ENCODE measurements at regions of chr10 and their contacts with region 1.

Region 1: GRCh38 chr10:84264611-84265141 is 19.8 kb downstream of the RGR start:
- DNase-seq: peak; percentile 66
- ATAC-seq: peak; percentile 99
- H3K4me3 ChIP-seq: no peak overlapping the region
- H3K27ac ChIP-seq: no peak overlapping the region
- H3K4me1 ChIP-seq: no peaks in the 10 kb centered on the region
- H3K27me3 ChIP-seq: peaks cover 3% of the 10 kb centered on the region; the same call in 1 of the 2 replicates
- CTCF ChIP-seq: peak; percentile 96
- POLR2A ChIP-seq: peak; percentile 49; the same call in 1 of the 2 replicates
- RAD21 ChIP-seq: peak; percentile 97

Region 2: GRCh38 chr10:84166620-84167288 is 97.9 kb before region 1 on chr10:
- CTCF ChIA-PET with region 1: no interaction called
- POLR2A ChIA-PET with region 1: no interaction called
- dilution Hi-C with region 1: no loop called
- in situ Hi-C with region 1: no loop called
- intact Hi-C with region 1: no loop called
- DNase-seq: no peak
- ATAC-seq: no peak
- H3K4me3 ChIP-seq: no peak overlapping the region
- H3K27ac ChIP-seq: no peak overlapping the region
- H3K4me1 ChIP-seq: no peaks in the 10 kb centered on the region
- H3K27me3 ChIP-seq: peaks cover 6% of the 10 kb centered on the region
- CTCF ChIP-seq: no peak
- POLR2A ChIP-seq: no peak
- RAD21 ChIP-seq: no peak

Region 3: GRCh38 chr10:84328418-84329195 is 63.9 kb after region 1 on chr10 and contains the start of gene CCSER2:
- CTCF ChIA-PET with region 1: interaction called, 3 read pairs
- POLR2A ChIA-PET with region 1: no interaction called
- dilution Hi-C with region 1: no loop called
- in situ Hi-C with region 1: no loop called
- intact Hi-C with region 1: loop called (anchors 5 kb)
- DNase-seq: no peak
- ATAC-seq: peak; percentile 94
- H3K4me3 ChIP-seq: peak within 1 kb of the TSS; percentile 96
- H3K27ac ChIP-seq: peak within 1 kb of the TSS; percentile 90
- H3K4me1 ChIP-seq: peaks cover 2% of the 10 kb centered on the region; the same call in 1 of the 2 replicates
- H3K27me3 ChIP-seq: no peaks in the 10 kb centered on the region
- CTCF ChIP-seq: no peak
- POLR2A ChIP-seq: peak; percentile 95
- RAD21 ChIP-seq: no peak
- total RNA-seq, gene CCSER2: 27.8 and 31.7 TPM in 2 replicates

Region 4: GRCh38 chr10:84352251-84352842 is 87.7 kb after region 1 on chr10:
- CTCF ChIA-PET with region 1: interaction called, 3 read pairs
- POLR2A ChIA-PET with region 1: no interaction called
- dilution Hi-C with region 1: no loop called
- in situ Hi-C with region 1: no loop called
- intact Hi-C with region 1: loop called (anchors 2 kb)
- DNase-seq: peak; percentile 72
- ATAC-seq: peak; percentile 75
- H3K4me3 ChIP-seq: no peak overlapping the region
- H3K27ac ChIP-seq: no peak overlapping the region
- H3K4me1 ChIP-seq: peaks cover 12% of the 10 kb centered on the region
- H3K27me3 ChIP-seq: no peaks in the 10 kb centered on the region
- CTCF ChIP-seq: peak; percentile 74
- POLR2A ChIP-seq: no peak
- RAD21 ChIP-seq: peak; percentile 82

Region 5: DNA sequence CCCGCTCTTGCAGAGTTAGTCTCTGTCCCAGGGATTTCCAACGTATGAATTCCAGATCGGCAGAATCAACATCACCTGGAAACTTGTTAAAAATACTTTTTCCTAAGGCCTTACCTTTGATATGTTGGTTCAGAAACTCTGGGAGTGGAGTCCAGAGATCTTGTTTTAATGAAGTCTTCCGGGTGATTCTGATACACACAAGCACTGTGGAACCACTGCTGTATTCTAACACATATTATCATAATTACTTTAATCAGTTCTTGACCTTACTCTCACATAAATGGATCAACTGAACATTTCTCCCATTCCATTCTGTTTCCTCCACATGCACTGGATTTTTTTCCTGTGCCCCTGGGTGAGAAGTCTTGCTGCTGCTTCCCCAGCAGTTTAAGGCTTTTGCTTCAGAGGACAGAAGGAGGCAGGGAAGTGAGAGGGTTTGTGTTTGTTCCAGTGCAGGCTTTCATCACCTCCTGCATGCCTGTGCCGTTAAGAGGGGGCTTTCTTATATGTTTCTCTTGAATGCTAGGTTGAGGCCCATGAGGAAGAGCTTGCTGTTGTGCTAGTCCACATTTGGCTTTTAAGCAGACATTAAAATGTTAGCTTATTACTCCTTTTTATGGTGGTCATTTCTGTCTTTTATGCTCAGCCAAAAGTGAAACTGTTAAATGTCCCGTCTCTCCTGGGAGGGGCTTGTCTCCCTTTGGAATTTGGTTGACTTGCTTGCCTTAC is 96.1 kb after region 1 on chr10:
- CTCF ChIA-PET with region 1: interaction called, 6 read pairs
- POLR2A ChIA-PET with region 1: no interaction called
- dilution Hi-C with region 1: no loop called
- in situ Hi-C with region 1: loop called (anchors 10 kb)
- intact Hi-C with region 1: no loop called
- DNase-seq: peak; percentile 34
- ATAC-seq: peak; percentile 77
- H3K4me3 ChIP-seq: peak overlapping the region; percentile 71
- H3K27ac ChIP-seq: peak overlapping the region; percentile 82; the same call in 1 of the 2 replicates
- H3K4me1 ChIP-seq: peaks cover 8% of the 10 kb centered on the region
- H3K27me3 ChIP-seq: no peaks in the 10 kb centered on the region
- CTCF ChIP-seq: no peak
- POLR2A ChIP-seq: no peak
- RAD21 ChIP-seq: no peak

Region 6: DNA sequence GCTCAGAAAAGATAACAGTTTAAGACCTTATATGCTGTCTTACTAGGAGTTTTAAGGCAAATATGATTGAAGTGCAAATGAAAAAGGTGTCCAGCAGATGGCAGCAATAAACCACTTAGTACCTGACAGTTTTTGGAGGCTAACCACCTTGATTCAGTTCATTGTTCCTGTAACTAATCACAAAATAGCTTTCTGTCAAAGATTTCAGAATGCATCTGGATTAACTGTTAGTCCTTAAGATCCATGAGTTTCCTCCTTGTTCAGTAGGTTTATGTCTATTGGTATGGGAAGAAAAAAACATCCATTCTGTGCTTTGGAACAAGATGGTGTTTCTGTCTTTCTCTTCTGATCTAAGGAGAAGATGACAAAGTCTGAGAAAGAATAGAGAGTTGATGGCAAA is 110.3 kb after region 1 on chr10:
- CTCF ChIA-PET with region 1: no interaction called
- POLR2A ChIA-PET with region 1: no interaction called
- dilution Hi-C with region 1: no loop called
- in situ Hi-C with region 1: no loop called
- intact Hi-C with region 1: loop called (anchors 2 kb)
- DNase-seq: peak; percentile 69
- ATAC-seq: 0 out of 2 replicates have a peak, but pooled peaks have one; percentile 32
- H3K4me3 ChIP-seq: no peak overlapping the region
- H3K27ac ChIP-seq: no peak overlapping the region
- H3K4me1 ChIP-seq: no peaks in the 10 kb centered on the region
- H3K27me3 ChIP-seq: no peaks in the 10 kb centered on the region
- CTCF ChIP-seq: peak; percentile 66
- POLR2A ChIP-seq: no peak
- RAD21 ChIP-seq: peak; percentile 82

Region 7: GRCh38 chr10:84531396-84531795 is 266.7 kb after region 1 on chr10:
- CTCF ChIA-PET with region 1: interaction called, 54 read pairs
- POLR2A ChIA-PET with region 1: no interaction called
- dilution Hi-C with region 1: no loop called
- in situ Hi-C with region 1: loop called (anchors 5 kb)
- intact Hi-C with region 1: no loop called
- DNase-seq: no peak
- ATAC-seq: no peak
- H3K4me3 ChIP-seq: no peak overlapping the region
- H3K27ac ChIP-seq: no peak overlapping the region
- H3K4me1 ChIP-seq: no peaks in the 10 kb centered on the region
- H3K27me3 ChIP-seq: no peaks in the 10 kb centered on the region
- CTCF ChIP-seq: no peak
- POLR2A ChIP-seq: no peak
- RAD21 ChIP-seq: no peak